Aorta (tissue), 5 donors: ENCODE measurements at regions of chr15 and their contacts with region 1.

Region 1: DNA sequence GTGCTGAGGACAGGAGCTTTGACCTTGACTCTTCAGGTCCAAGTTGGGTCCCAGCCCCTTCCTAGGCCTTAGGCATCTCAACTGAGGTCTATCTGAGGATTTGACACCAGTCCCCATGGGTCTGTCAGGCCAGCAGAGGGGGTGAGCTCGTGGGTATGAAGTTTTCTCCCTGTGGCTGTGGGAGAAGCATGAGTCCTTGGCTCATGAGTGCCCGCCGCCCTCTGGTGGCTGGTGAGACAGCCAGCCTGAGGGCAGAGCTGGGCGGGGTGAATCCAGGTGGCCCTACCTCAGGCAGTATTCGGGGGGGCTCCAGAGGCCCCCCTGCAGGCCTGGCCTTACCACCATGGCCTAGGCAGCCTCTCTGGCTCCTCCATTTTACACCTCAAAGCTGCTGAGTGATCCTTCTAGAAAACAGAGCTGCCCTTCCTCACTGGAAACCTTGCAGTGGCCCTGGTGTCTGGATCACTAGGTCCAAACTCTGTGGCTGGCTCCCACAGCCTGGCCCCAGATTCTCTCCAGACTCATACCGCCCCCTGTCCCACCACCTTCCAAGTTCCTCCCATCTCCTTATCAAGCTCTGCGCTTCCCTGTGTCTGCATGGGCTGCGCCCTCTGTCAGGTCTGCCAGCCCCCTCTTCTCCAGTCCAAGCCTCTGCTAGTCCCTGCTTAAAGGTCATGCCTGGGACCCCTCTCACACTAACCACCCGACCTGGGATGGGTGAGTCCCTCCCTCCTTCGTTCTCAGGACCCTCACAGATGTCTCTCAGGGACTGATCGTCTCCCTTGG is 16.1 kb downstream of the SH2D7 start:
- DNase-seq: peak; percentile 93 to 94
- ATAC-seq: peak; percentile 88
- H3K4me3 ChIP-seq: no peak overlapping the region
- H3K27ac ChIP-seq: no peak overlapping the region
- H3K4me1 ChIP-seq: no peaks in the 10 kb centered on the region
- H3K27me3 ChIP-seq: no peaks in the 10 kb centered on the region

Region 2: DNA sequence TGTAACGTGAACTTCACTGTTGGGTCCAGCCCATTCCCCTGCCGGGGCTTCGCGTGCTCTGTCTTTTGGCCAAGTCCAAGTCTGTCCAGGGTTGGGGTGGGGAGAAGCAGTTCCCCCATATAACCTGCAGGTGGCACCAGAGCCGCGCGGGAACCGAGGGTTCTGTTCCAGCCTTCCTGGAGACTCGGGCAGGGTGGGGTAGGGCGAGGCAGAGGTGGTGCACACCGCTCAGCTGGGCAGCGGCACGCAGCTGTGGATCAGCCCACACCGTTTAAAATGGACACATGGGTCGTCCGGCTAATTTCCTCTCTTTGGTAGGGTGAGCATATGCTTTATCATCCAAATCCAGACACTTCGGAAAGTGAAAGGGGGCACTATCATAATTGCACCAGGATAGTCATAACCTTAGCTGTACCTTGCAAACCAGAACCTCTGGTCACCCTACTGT is 149.0 kb before region 1 on chr15:
- intact Hi-C with region 1: loop called (anchors 2 kb)
- DNase-seq: peak; percentile 81 to 94
- ATAC-seq: peak; percentile 95
- H3K4me3 ChIP-seq: no peak overlapping the region
- H3K27ac ChIP-seq: no peak overlapping the region
- H3K4me1 ChIP-seq: no peaks in the 10 kb centered on the region
- H3K27me3 ChIP-seq: no peaks in the 10 kb centered on the region

Region 3: GRCh38 chr15:77966540-77967290 is 141.8 kb before region 1 on chr15:
- intact Hi-C with region 1: loop called in 1 of 2 experiments (anchors 2 kb)
- DNase-seq: no peak
- ATAC-seq: peak; percentile 90
- H3K4me3 ChIP-seq: no peak overlapping the region
- H3K27ac ChIP-seq: no peak overlapping the region
- H3K4me1 ChIP-seq: no peaks in the 10 kb centered on the region
- H3K27me3 ChIP-seq: no peaks in the 10 kb centered on the region

Region 4: GRCh38 chr15:78072080-78072892 is 36.2 kb before region 1 on chr15:
- intact Hi-C with region 1: no loop called
- DNase-seq: peak in 1 of 2 donors; percentile 68
- ATAC-seq: peak; percentile 47
- H3K4me3 ChIP-seq: no peak overlapping the region
- H3K27ac ChIP-seq: peak overlapping the region in 1 of 2 donors; percentile 50
- H3K4me1 ChIP-seq: peaks cover 0 to 2% of the 10 kb centered on the region in 2 donors
- H3K27me3 ChIP-seq: no peaks in the 10 kb centered on the region

Region 5: DNA sequence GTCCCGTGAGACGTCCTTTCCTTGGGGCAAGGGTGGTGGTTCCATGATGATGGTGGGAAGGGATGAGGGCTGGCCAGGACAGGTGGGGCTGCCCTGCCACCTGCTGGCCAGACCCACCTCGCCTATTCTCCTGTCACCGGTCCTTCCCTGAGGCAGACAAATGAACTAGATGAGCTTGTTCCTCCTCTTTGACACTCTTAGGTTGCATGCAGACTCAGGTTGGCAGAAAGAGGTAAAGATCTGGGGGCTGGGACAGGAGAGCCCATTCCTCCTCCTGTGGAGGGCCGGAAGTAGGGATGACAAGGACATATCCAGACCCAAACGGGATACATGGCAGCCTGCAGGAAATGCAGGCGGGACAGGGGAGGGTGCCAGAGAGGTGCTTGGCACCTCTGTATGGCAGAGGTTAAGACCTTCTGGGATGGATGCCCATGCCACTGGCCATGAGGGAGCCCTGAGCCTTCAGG is 87.3 kb after region 1 on chr15:
- intact Hi-C with region 1: loop called (anchors 1 to 2 kb)
- DNase-seq: peak in 1 of 2 donors; percentile 70
- ATAC-seq: no peak
- H3K4me3 ChIP-seq: no peak overlapping the region
- H3K27ac ChIP-seq: no peak overlapping the region
- H3K4me1 ChIP-seq: no peaks in the 10 kb centered on the region
- H3K27me3 ChIP-seq: no peaks in the 10 kb centered on the region

Region 6: GRCh38 chr15:78241007-78241406 is 132.5 kb after region 1 on chr15:
- intact Hi-C with region 1: loop called (anchors 1 to 2 kb)
- DNase-seq: peak; percentile 88 to 96
- ATAC-seq: peak; percentile 91
- H3K4me3 ChIP-seq: no peak overlapping the region
- H3K27ac ChIP-seq: no peak overlapping the region
- H3K4me1 ChIP-seq: no peaks in the 10 kb centered on the region
- H3K27me3 ChIP-seq: no peaks in the 10 kb centered on the region

Region 7: DNA sequence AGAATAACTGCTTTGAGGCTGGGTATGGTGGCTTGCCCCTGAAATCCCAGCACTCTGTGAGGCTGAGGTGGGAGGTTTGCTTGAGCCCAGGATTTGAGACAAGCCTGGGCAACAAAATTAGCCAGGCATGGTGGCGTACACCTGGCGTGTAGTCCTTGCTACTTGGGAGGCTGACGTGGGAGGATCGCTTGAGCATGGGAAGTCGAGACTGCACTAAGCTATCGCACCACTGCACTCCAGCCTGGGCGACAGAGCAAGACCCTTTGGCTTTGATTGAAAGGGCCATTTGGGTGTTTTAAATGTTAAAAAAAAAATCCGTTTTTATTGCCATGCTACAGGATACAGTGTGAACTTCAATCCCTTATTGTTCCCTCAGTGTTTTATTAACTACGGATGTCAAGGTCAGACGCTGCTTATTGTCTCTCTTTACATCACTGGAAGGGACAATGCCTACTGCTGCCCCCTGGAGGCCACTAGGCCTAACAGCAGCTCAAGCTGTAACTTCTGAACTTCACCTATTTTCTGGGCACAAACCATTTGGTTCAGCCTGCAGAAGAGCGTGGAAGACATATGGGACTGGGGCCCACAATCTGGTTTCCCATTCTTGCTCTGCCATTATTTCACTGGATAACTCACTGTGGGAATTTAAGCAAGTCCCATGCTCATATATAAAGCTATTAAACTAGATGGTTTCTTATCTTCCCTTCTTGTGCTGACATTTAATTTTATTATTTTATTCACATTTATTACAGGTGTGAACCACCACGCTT is 314.3 kb after region 1 on chr15:
- intact Hi-C with region 1: loop called (anchors 10 kb)
- DNase-seq: peak; percentile 66 to 86
- ATAC-seq: peak; percentile 80
- H3K4me3 ChIP-seq: no peak overlapping the region
- H3K27ac ChIP-seq: no peak overlapping the region
- H3K4me1 ChIP-seq: no peaks in the 10 kb centered on the region
- H3K27me3 ChIP-seq: no peaks in the 10 kb centered on the region